B cell (primary cell): ENCODE measurements at regions of chr4 and their contacts with region 1.

Region 1: DNA sequence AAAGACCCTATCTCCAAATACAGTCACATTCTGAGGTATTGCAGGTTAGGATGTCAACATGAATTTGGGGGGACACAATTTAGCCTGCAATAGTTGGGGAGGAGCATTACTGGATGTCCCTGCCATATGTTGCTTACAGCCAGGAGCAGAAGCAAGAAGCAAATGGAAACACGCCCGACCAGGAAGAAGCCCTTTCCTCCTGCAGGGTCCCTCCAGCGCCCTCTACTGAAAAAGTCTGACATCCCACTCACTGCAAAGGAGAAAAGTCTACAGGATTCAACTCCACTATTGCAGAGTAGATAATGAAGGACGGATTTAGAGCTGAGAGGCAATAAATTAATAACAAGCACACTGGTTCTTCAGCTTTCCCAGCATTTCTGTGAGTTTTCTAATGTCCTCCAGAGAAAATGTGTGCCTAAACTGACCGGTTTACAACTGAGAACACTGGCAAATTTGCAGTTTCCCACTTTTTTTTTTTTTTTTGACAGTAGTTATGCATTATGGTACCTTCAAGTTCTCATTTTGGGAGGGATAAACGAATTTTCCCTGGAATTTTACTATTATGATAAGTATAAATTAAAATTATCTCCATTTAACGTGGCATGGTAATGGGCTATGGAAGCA is 31.7 kb downstream of the COQ2 start:
- DNase-seq: peak; percentile 82
- ATAC-seq: peak; percentile 69
- H3K4me3 ChIP-seq: no peak overlapping the region
- H3K4me3 Mint-ChIP-seq: no peak overlapping the region
- H3K27ac ChIP-seq: peak overlapping the region in 1 of 2 donors; percentile 3
- H3K27ac Mint-ChIP-seq: peak overlapping the region; percentile 65
- H3K4me1 ChIP-seq: peaks cover 46 to 49% of the 10 kb centered on the region in 2 donors
- H3K4me1 Mint-ChIP-seq: peaks cover 53% of the 10 kb centered on the region
- H3K27me3 ChIP-seq: no peaks in the 10 kb centered on the region
- H3K27me3 Mint-ChIP-seq: no peaks in the 10 kb centered on the region
- CTCF ChIP-seq: peak; percentile 85

Region 2: DNA sequence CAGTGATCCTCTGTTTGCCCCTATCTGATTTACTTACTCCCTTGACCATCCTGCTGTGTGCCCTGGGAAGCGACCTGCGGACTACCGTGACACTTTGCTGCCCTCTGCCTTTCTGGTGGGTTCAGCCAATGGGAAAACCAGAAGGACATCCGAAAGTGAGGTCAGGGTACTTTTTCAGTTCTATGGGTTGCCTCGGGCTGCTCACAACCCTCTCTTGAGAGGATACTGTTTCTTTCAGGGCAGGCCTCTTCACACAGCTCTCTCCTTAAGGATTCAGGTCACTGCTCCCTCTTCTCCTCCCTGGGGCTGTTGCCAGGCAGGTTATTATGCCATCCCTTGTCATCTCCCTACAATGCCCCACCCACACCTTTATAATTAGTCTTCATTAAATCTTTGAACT is 159.8 kb before region 1 on chr4:
- CTCF ChIA-PET with region 1: interaction called, 12 read pairs
- POLR2A ChIA-PET with region 1: interaction called, 3 read pairs
- intact Hi-C with region 1: no loop called
- DNase-seq: no peak
- ATAC-seq: no peak
- H3K4me3 ChIP-seq: no peak overlapping the region
- H3K4me3 Mint-ChIP-seq: no peak overlapping the region
- H3K27ac ChIP-seq: peak overlapping the region in 1 of 2 donors; percentile 58
- H3K27ac Mint-ChIP-seq: peak overlapping the region; percentile 80
- H3K4me1 ChIP-seq: peaks cover 0 to 5% of the 10 kb centered on the region in 2 donors
- H3K4me1 Mint-ChIP-seq: peaks cover 29% of the 10 kb centered on the region
- H3K27me3 ChIP-seq: no peaks in the 10 kb centered on the region
- H3K27me3 Mint-ChIP-seq: no peaks in the 10 kb centered on the region
- CTCF ChIP-seq: no peak

Region 3: GRCh38 chr4:83174844-83175414 is 78.0 kb before region 1 on chr4:
- CTCF ChIA-PET with region 1: interaction called, 5 read pairs
- POLR2A ChIA-PET with region 1: no interaction called
- intact Hi-C with region 1: loop called (anchors 5 kb)
- DNase-seq: peak; percentile 82
- ATAC-seq: peak; percentile 79
- H3K4me3 ChIP-seq: peak overlapping the region; percentile 35 to 73 (median 58)
- H3K4me3 Mint-ChIP-seq: peak overlapping the region; percentile 89
- H3K27ac ChIP-seq: peak overlapping the region; percentile 80 to 87
- H3K27ac Mint-ChIP-seq: peak overlapping the region; percentile 96
- H3K4me1 ChIP-seq: peaks cover 78 to 81% of the 10 kb centered on the region in 2 donors
- H3K4me1 Mint-ChIP-seq: peaks cover 78% of the 10 kb centered on the region
- H3K27me3 ChIP-seq: no peaks in the 10 kb centered on the region
- H3K27me3 Mint-ChIP-seq: no peaks in the 10 kb centered on the region
- CTCF ChIP-seq: no peak

Region 4: DNA sequence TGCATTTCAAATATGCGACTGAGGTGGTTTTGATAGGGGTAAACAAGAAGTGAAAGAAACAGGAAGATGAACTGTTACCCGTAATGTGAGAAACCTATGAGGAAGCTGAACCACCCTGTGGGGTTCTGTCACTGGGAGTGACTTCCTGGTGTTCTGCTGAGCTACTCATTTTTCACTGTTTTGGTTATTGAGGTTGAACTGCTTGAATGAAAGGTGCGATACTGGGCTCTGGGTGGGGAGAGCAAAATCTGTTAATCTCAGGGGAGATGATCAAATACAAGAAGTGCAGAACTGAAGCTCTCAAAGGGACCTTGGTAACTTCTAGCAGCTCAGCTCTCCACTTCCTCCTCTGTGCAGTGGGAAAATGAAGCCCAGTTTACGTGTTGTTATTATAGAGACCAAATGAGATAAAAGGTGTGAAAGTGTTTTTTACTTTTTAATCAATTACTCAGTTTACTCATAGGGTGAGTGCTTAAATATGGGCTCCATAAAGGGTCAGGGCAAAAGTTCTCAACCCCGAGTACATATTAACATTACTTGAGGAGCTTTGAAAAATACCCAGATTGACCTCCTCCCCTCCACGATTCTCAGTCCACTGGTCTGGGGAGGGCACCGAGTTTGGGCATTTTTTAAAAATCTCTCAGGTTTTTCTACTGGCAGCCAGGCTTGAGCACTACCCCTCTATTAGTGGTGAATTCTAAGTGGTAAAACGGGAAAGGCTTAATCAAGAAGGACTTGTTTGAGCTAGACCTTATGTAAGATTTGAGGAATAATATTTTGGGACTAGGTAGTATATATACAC is 35.0 kb before region 1 on chr4:
- CTCF ChIA-PET with region 1: interaction called, 28 read pairs
- POLR2A ChIA-PET with region 1: interaction called, 4 read pairs
- intact Hi-C with region 1: loop called (anchors 1 kb)
- DNase-seq: peak; percentile 95
- ATAC-seq: peak; percentile 90
- H3K4me3 ChIP-seq: peak overlapping the region in 3 of 5 experiments; percentile 6 to 37 (median 30)
- H3K4me3 Mint-ChIP-seq: peak overlapping the region; percentile 24
- H3K27ac ChIP-seq: peak overlapping the region; percentile 88 to 94
- H3K27ac Mint-ChIP-seq: peak overlapping the region; percentile 92
- H3K4me1 ChIP-seq: peaks cover 90 to 94% of the 10 kb centered on the region in 2 donors
- H3K4me1 Mint-ChIP-seq: peaks cover 87% of the 10 kb centered on the region
- H3K27me3 ChIP-seq: no peaks in the 10 kb centered on the region
- H3K27me3 Mint-ChIP-seq: no peaks in the 10 kb centered on the region
- CTCF ChIP-seq: no peak